ENCODE measurements at regions of chr4 and their contacts with region 1.

Region 1: DNA sequence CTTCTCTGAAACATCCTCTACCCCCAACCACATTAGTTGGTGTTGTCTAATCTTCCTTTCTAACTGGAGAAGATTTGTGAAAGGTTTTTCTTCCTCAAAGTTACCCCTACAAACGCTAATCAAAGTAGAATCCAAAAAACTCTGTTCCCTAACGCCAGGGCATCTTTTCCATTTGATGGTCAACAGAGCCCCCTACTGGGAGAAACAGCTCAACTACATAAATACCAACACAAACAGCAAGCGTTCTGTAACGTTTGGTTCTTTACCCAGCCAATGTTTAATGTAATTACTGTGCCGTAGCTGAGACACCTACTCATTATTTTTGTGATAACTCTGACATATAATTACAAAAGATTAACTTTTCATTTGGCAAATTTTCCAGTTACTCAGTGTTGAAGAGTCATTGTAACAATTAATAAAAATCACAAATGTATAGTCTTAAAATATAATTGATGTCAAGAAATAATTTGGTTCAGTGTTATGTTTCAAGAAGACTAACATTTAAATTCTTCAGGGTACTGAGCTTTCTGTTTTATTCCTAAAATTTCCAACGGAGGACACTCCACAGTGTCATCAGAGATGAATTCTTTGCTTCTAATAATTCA is 94.9 kb upstream of the TBC1D9 start:
- DNase-seq: no peak
- H3K4me3 ChIP-seq: no peak overlapping the region
- H3K27ac ChIP-seq: no peak overlapping the region
- H3K4me1 ChIP-seq: peaks cover 0 to 3% (median 1%) of the 10 kb centered on the region in 4 donors
- H3K27me3 ChIP-seq: no peaks in the 10 kb centered on the region
- CTCF ChIP-seq: peak; percentile 62 to 86 (median 74)
- EP300 ChIP-seq: no peak
- POLR2A ChIP-seq: no peak

Region 2: DNA sequence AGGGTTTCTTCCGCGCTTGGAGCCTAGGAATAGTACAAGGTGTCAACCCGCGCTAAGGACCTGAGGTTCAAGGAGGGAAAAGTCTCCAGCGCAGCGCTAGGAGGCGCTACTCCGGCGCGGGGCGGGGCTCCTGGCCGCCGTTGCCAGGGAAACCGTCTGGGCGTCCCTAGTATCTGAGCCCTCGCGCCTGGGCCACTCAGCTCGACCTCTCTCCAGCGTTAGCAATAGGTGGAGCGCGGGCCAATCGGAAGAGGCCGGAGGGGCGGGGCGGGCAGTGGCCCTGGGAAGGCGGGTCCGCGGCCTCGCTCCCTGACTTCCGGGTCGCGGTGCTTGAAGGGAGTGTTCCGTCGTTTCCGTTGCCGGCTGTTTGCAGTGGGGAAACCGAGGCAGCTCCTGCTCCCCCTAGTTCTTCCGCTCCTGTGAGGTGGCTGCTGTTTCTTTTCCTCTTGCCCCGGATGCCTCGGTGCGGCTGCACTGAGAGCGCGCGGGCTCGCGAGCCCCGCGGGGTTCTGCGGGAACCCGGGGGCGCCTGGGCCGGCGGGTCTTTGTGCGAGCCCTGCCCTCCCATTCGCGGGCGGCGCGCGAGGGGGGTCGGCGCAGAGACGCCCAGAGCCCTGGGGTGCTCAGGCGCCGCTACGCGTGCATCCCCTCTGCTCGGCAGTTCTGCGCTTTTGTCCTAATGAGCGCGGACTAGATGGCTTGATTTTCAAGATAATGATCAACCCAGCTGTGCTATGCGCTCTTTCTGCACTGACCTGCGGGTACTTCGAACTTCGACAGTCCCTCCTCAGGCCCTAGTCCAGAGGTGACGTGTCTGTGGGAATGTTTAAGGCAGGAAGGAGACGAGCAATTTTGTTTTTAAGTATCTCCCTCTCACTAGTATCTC is 327.0 kb before region 1 on chr4 and contains the start of gene ELMOD2:
- intact Hi-C with region 1: loop called (anchors 5 kb)
- DNase-seq: peak; percentile 99
- H3K4me3 ChIP-seq: peak within 1 kb of the TSS; percentile 84 to 95 (median 89)
- H3K27ac ChIP-seq: peak within 1 kb of the TSS; percentile 88 to 92 (median 90)
- H3K4me1 ChIP-seq: peaks cover 0 to 16% (median 13%) of the 10 kb centered on the region in 4 donors
- H3K27me3 ChIP-seq: no peaks in the 10 kb centered on the region
- CTCF ChIP-seq: peak; percentile 73 to 82 (median 78)
- EP300 ChIP-seq: no peak
- POLR2A ChIP-seq: no peak
- total RNA-seq, gene ELMOD2: 11.8 to 20.7 (median 19.6) TPM

Region 3: DNA sequence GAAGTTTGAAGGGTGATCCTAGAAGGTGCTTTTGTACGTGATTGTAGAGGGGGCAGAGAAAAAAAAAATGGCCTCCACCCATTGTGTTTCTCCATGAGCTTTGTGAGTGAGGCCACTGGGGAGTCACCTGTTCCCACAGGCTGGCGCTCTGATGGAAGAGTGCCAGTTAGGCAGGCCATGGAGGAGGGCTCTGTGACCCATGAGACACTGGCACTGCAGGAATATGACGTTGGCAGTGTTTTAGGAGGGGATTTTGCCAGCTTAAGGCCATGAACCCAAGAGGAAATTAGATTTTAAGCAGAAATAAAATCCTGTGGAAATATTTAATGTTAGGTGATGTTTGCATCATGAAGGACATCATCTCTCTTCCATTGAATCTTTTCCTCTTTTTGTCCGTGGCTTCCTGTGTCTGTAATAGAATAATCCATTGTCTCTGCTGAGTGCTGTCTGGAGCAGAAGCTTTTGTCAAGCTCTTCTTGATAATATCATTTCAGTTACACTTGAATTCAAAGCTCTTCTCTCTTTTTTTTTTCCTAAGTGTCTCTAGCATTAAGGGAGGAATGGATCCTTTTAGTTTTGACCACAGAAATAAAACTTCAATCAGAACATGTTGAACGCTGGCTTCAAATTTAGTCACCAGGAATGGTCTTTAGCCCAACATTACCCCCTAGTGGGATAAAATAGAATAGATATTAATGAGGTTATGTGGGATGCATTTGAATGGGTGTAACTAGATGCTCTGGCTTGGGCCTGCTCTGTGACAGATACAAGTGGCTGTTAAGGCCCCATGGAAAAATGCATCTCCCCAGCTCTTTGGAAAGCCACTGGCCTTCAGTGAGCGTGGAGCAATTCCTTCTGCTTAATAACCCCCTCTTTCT is 241.3 kb before region 1 on chr4:
- intact Hi-C with region 1: loop called (anchors 10 kb)
- DNase-seq: no peak
- H3K4me3 ChIP-seq: no peak overlapping the region
- H3K27ac ChIP-seq: no peak overlapping the region
- H3K4me1 ChIP-seq: no peaks in the 10 kb centered on the region
- H3K27me3 ChIP-seq: no peaks in the 10 kb centered on the region
- CTCF ChIP-seq: peak in 3 of 4 experiments; percentile 9 to 46 (median 17)
- EP300 ChIP-seq: no peak
- POLR2A ChIP-seq: no peak

Region 4: DNA sequence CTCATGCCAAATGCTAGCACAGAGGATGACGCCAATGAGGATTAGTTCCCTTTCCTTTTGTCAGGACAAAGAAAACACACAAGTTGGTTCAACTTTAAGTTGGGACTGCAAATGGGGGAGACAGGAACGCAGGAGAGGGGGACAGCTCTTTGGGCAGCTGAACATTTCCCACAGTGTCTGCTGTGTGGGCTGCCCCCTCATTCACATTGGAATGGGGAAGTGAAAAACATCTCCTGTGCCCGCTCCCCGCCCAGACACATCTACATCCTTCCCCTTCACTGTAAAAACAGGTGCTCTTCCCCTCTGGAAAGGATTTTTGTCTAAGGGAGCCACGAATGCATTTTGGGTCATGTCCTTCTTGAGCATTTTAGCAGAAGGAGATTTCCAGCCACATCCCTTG is 50.5 kb before region 1 on chr4:
- intact Hi-C with region 1: no loop called
- DNase-seq: no peak
- H3K4me3 ChIP-seq: no peak overlapping the region
- H3K27ac ChIP-seq: no peak overlapping the region
- H3K4me1 ChIP-seq: no peaks in the 10 kb centered on the region
- H3K27me3 ChIP-seq: no peaks in the 10 kb centered on the region
- CTCF ChIP-seq: no peak
- EP300 ChIP-seq: no peak
- POLR2A ChIP-seq: no peak

Region 5: GRCh38 chr4:140976768-140977167 is 125.6 kb after region 1 on chr4:
- intact Hi-C with region 1: no loop called
- DNase-seq: no peak
- H3K4me3 ChIP-seq: no peak overlapping the region
- H3K27ac ChIP-seq: no peak overlapping the region
- H3K4me1 ChIP-seq: peaks cover 0 to 9% (median 1%) of the 10 kb centered on the region in 4 donors
- H3K27me3 ChIP-seq: no peaks in the 10 kb centered on the region
- CTCF ChIP-seq: no peak
- EP300 ChIP-seq: no peak
- POLR2A ChIP-seq: no peak

Region 6: DNA sequence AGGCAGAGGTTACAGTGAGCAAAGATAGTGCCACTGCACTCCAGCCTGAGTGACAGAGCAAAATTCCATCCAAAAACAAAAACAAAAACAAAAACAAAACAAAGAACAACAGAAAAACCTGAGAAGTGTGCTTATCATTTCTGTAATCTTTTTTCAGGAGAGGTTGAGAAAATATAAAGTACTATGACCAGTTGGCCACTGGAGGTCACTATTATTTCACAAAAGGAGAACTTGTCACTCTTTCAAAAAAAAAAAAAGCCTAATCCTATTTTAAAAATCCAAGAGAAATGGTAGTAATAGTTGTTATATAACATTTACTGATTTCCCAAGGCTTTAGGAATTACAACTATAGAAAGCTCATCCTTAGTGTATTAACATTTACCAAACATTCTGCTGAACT is 307.1 kb after region 1 on chr4:
- intact Hi-C with region 1: no loop called
- DNase-seq: no peak
- H3K4me3 ChIP-seq: no peak overlapping the region
- H3K27ac ChIP-seq: no peak overlapping the region
- H3K4me1 ChIP-seq: peaks cover 0 to 16% (median 13%) of the 10 kb centered on the region in 4 donors
- H3K27me3 ChIP-seq: no peaks in the 10 kb centered on the region
- CTCF ChIP-seq: peak; percentile 5 to 49 (median 16)
- EP300 ChIP-seq: no peak
- POLR2A ChIP-seq: no peak